PC-9 (cell line): ENCODE measurements at regions of chr5 and their contacts with region 1.

Region 1: DNA sequence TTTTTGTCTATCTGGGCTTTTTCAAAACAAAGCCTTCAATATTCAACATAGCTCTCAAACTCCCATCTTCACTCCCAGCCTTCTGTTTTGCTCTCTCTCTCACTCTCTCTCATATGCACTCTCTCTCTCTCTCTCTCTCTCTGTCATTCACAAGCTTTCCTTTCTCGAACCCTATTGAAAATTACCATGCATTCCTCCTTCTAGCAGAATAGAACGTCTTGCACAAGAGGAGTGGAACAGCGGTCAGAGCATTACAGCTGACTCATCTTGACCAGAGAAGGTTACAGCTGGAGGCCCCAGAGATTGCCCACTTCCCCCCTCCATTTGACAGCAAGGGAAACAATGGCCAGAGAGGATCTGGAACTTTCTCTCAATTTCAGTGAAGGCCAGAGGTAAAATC is 51.0 kb upstream of the LIFR start:
- DNase-seq: peak; percentile 59 to 60
- H3K4me3 ChIP-seq: no peak overlapping the region
- H3K27ac ChIP-seq: peak overlapping the region; percentile 33; the same call in 1 of the 2 replicates
- H3K4me1 ChIP-seq: peaks cover 26% of the 10 kb centered on the region
- H3K27me3 ChIP-seq: no peaks in the 10 kb centered on the region
- CTCF ChIP-seq: no peak

Region 2: GRCh38 chr5:38396766-38397165 is 210.6 kb before region 1 on chr5:
- CTCF ChIA-PET with region 1: no interaction called
- POLR2A ChIA-PET with region 1: interaction called, 26 read pairs
- intact Hi-C with region 1: no loop called
- DNase-seq: no peak
- H3K4me3 ChIP-seq: no peak overlapping the region
- H3K27ac ChIP-seq: no peak overlapping the region
- H3K4me1 ChIP-seq: no peaks in the 10 kb centered on the region
- H3K27me3 ChIP-seq: peaks cover 85% of the 10 kb centered on the region
- CTCF ChIP-seq: no peak

Region 3: DNA sequence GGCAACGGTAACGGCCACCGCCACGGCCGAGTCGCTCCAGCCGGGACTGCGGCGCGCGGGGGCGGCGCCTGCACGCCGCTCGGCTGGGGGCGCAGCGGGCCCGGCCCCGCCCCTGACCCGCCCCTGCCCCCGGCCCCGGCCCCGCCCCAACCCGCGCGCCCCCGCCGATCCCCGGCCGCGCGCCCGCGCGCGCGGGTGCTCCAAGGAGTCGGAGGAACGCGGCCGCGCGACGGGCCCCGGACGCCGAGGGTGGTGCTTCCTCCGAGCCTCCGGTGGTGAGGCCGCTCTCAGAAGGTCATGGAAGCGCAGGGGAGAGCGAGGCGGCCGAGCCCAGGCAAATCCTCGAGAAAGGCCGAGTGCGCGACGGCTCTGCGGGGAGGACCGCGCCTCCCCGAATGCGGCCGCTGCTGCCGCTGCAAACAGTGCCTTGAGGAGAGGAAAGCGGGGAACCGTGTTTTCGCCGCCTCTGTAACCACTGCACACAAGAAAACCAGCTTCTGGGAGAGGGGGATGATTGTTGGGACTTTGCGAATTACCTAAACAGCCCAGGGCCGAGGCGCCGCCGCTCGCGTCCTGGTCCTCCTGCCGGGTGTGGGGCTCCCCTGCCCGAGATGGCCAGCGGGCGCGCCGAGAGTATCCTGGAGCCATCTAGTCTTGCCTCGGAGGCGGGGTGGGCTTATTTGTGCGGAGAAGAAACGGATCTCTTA is 50.6 kb before region 1 on chr5 and contains the start of gene LIFR:
- CTCF ChIA-PET with region 1: no interaction called
- POLR2A ChIA-PET with region 1: no interaction called
- intact Hi-C with region 1: loop called (anchors 2 kb)
- DNase-seq: peak; percentile 53 to 95
- H3K4me3 ChIP-seq: peak within 1 kb of the TSS; percentile 97
- H3K27ac ChIP-seq: peak within 1 kb of the TSS; percentile 58
- H3K4me1 ChIP-seq: peaks cover 10% of the 10 kb centered on the region; the same call in 1 of the 2 replicates
- H3K27me3 ChIP-seq: 0 out of 2 replicates have a peak, but pooled peaks cover 15% of the 10 kb centered on the region
- CTCF ChIP-seq: no peak
- total RNA-seq, gene LIFR: 22.0 and 28.6 TPM in 2 replicates

Region 4: DNA sequence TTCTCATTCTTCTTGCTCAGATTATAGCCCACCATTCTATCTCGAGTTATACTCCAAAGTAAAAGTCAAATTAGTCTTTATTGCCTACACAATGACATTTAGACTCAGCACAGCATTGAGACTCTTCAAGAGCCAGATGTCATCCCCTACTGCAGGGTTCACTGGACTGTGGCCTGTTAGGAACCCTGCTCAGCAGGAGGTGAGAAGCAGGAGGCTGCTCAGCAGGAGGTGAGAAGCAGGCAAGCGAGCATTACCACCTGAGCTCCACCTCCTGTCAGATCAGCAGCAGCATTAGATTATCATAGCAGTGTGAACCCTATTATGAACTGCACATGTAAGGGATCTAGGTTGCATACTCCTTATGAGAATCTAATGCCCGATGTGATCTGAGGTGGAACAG is 38.2 kb before region 1 on chr5:
- CTCF ChIA-PET with region 1: no interaction called
- POLR2A ChIA-PET with region 1: interaction called, 29 read pairs
- intact Hi-C with region 1: no loop called
- DNase-seq: no peak
- H3K4me3 ChIP-seq: no peak overlapping the region
- H3K27ac ChIP-seq: no peak overlapping the region
- H3K4me1 ChIP-seq: no peaks in the 10 kb centered on the region
- H3K27me3 ChIP-seq: no peaks in the 10 kb centered on the region
- CTCF ChIP-seq: no peak

Region 5: GRCh38 chr5:38634708-38635357 is 27.4 kb after region 1 on chr5:
- CTCF ChIA-PET with region 1: interaction called, 8 read pairs
- POLR2A ChIA-PET with region 1: interaction called, 25 read pairs
- intact Hi-C with region 1: loop called (anchors 1 kb)
- DNase-seq: peak in 1 of 2 experiments; percentile 30
- H3K4me3 ChIP-seq: no peak overlapping the region
- H3K27ac ChIP-seq: no peak overlapping the region
- H3K4me1 ChIP-seq: peaks cover 14% of the 10 kb centered on the region
- H3K27me3 ChIP-seq: no peaks in the 10 kb centered on the region
- CTCF ChIP-seq: no peak

Region 6: DNA sequence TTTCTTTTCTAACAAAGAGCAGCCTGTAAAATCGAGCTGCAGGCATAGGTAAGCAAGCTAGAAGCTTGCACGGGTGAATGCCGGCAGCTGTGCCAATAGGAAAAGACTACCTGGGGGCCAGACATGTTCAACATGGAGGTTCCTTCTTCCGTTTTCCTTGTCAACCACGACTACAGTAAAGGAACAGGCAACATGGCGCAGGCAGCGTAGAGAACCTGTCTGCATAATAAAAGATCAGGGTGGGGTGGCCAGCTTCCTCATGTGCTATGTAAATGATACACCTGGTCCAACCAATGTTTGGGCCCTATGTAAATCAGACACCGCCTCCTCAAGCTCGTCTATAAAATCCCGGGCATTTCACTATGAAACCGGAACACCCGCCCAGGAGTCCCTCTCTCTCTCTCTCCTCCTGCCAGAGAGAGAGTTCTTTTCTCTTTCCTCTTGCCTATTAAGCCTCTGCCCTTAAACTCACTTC is 52.8 kb after region 1 on chr5:
- CTCF ChIA-PET with region 1: no interaction called
- POLR2A ChIA-PET with region 1: interaction called, 3 read pairs
- intact Hi-C with region 1: loop called (anchors 2 kb)
- DNase-seq: peak; percentile 82 to 88
- H3K4me3 ChIP-seq: peak overlapping the region; percentile 57; the same call in 1 of the 2 replicates
- H3K27ac ChIP-seq: peak overlapping the region; percentile 40
- H3K4me1 ChIP-seq: no peaks in the 10 kb centered on the region
- H3K27me3 ChIP-seq: no peaks in the 10 kb centered on the region
- CTCF ChIP-seq: no peak